ENCODE measurements at regions of chr1 and their contacts with region 1.

Region 1: DNA sequence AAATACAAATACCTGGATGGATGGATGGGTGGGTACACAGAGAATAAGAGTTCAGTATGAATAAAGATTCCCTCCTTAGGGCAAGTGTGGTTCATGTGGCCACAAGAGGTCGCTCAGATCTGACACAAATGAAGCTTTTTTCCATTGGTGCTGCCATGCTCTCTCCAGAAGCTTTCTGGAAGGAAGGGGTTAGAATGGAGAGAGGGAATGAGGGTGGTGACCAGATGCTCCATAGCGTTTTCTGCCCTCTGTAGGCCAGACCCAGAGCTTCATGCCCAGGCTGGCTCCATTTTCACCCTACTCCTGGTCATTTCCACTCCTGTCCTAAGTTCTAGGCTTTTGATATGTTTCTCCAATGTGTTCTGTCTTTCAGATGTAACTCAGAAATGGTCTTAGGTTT is 3.3 kb upstream of the FCRL6 start:
- DNase-seq: peak; percentile 74 to 91
- H3K4me3 ChIP-seq: no peak overlapping the region
- H3K27ac ChIP-seq: no peak overlapping the region
- H3K4me1 ChIP-seq: no peaks in the 10 kb centered on the region
- H3K27me3 ChIP-seq: peaks cover 0 to 26% (median 5%) of the 10 kb centered on the region in 3 donors
- CTCF ChIP-seq: peak in 5 of 7 experiments; percentile 60 to 89 (median 76)
- EP300 ChIP-seq: no peak
- POLR2A ChIP-seq: no peak

Region 2: GRCh38 chr1:159891275-159892157 is 92.6 kb after region 1 on chr1:
- intact Hi-C with region 1: loop called (anchors 5 kb)
- DNase-seq: peak; percentile 87 to 95
- H3K4me3 ChIP-seq: no peak overlapping the region
- H3K27ac ChIP-seq: no peak overlapping the region
- H3K4me1 ChIP-seq: peaks cover 13 to 41% (median 14%) of the 10 kb centered on the region in 4 donors
- H3K27me3 ChIP-seq: no peaks in the 10 kb centered on the region
- CTCF ChIP-seq: peak in 6 of 7 experiments; percentile 85 to 100 (median 92)
- EP300 ChIP-seq: no peak
- POLR2A ChIP-seq: no peak

Region 3: DNA sequence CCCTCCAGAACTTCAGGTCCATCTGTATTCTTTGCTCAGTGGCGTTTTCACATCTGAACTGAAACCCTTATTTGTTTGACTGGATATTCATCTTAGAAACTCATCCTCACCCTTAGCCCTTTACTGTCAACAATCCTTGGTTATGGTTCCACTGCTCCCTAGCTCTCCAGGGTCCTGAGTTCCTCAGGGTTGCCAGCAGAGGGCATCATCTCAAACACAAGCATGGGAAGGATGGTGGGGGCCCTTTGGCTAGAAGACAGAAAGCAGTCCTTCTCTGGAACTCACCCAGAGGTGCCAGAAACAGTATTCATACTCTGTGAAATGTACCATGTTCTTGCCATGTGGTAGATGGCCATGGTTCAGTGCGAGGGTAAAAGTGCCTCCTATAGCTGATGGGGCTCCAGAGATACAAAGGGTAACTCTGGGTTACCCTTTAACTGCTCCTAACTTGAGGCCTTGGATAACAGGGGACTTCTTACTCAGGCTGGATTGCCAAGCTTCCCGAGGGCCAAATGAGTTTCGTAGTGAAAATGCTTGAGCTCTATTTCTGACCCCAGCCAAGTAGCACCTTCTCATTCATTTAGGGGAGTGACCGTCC is 555.6 kb after region 1 on chr1:
- intact Hi-C with region 1: no loop called
- DNase-seq: peak in 1 of 2 donors; percentile 44
- H3K4me3 ChIP-seq: no peak overlapping the region
- H3K27ac ChIP-seq: no peak overlapping the region
- H3K4me1 ChIP-seq: no peaks in the 10 kb centered on the region
- H3K27me3 ChIP-seq: no peaks in the 10 kb centered on the region
- CTCF ChIP-seq: peak in 3 of 7 experiments; percentile 9 to 15 (median 11)
- EP300 ChIP-seq: no peak
- POLR2A ChIP-seq: no peak

Measured in stomach (tissue), 19 donors.